MCF 10A (cell line): ENCODE measurements at regions of chr1 and their contacts with region 1.

Region 1: GRCh38 chr1:235239851-235240250 is 78.8 kb upstream of the RBM34 start:
- DNase-seq: no peak
- H3K4me3 Mint-ChIP-seq: no peak overlapping the region
- H3K27ac Mint-ChIP-seq: peak overlapping the region; percentile 5
- H3K4me1 Mint-ChIP-seq: peaks cover 7% of the 10 kb centered on the region
- H3K27me3 Mint-ChIP-seq: no peaks in the 10 kb centered on the region
- CTCF ChIP-seq: no peak

Region 2: DNA sequence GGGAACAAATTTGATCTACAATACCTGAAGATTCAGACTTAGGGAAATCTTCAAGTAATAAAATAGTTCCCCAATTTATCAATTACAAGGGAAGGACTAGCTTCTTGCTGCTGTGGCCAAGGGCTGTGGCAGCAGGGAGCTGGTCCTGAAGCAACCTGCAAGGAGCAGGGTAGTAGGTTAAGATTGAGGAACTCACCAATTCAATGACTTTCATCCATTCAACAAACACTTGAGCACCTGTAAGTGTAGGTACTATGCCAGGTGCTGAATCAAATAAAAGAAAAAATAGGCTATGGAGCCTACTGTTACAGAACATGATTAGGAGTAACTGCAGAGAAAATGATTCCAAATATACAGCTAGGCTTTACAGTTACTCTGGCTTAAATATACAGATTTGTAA is 14.6 kb before region 1 on chr1:
- CTCF ChIA-PET with region 1: interaction called, 24 read pairs
- POLR2A ChIA-PET with region 1: interaction called, 45 read pairs
- intact Hi-C with region 1: no loop called
- DNase-seq: no peak
- H3K4me3 Mint-ChIP-seq: no peak overlapping the region
- H3K27ac Mint-ChIP-seq: no peak overlapping the region
- H3K4me1 Mint-ChIP-seq: peaks cover 3% of the 10 kb centered on the region
- H3K27me3 Mint-ChIP-seq: no peaks in the 10 kb centered on the region
- CTCF ChIP-seq: no peak

Region 3: GRCh38 chr1:235304549-235305451 is 64.9 kb after region 1 on chr1:
- CTCF ChIA-PET with region 1: interaction called, 10 read pairs
- POLR2A ChIA-PET with region 1: no interaction called
- intact Hi-C with region 1: no loop called
- DNase-seq: no peak
- H3K4me3 Mint-ChIP-seq: no peak overlapping the region
- H3K27ac Mint-ChIP-seq: peak overlapping the region; percentile 28
- H3K4me1 Mint-ChIP-seq: peaks cover 21% of the 10 kb centered on the region
- H3K27me3 Mint-ChIP-seq: no peaks in the 10 kb centered on the region
- CTCF ChIP-seq: no peak